Natural killer cell (primary cell): ENCODE measurements at regions of chr13 and their contacts with region 1.

Region 1: GRCh38 chr13:31909864-31910551 is 121.6 kb upstream of the FRY start:
- DNase-seq: peak in 1 of 2 donors; percentile 82
- ATAC-seq: peak; percentile 66 to 78 (median 71)
- H3K4me3 ChIP-seq: no peak overlapping the region
- H3K4me3 Mint-ChIP-seq: no peak overlapping the region
- H3K27ac ChIP-seq: no peak overlapping the region
- H3K27ac Mint-ChIP-seq: no peak overlapping the region
- H3K4me1 ChIP-seq: no peaks in the 10 kb centered on the region
- H3K4me1 Mint-ChIP-seq: peaks cover 13 to 19% of the 10 kb centered on the region in 2 donors
- H3K27me3 ChIP-seq: no peaks in the 10 kb centered on the region
- H3K27me3 Mint-ChIP-seq: no peaks in the 10 kb centered on the region
- CTCF ChIP-seq: peak; percentile 98

Region 2: DNA sequence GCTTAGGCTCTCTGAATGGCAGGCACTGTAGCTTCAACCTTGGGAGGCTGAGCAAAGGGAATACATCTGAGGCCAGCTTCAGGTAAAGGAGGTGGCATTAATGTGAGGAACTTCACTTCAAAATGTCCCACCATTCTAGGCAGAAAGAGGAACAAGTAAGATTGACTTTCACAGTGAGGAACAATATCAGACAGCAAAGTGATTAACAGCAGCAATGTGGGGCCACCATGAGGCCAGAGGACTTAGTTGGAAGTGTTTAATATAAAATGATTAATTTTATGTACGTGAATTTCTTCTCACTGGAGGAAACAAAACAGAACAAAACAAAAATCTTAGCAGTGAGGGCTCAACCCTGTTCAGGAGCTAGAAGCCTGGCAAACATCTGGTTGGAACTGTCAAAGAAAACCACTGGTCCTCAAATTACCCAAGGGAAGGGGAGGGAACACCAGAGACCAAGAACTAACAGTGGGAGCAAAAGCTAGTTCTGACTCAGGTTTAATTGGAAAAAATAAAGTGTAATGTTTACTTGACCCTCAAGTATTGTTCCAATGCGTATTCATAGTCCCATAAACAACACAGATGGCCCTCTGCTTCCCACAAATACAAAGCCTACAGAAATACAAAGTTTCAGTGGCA is 77.6 kb after region 1 on chr13:
- intact Hi-C with region 1: loop called (anchors 2 kb)
- DNase-seq: no peak
- ATAC-seq: no peak
- H3K4me3 ChIP-seq: no peak overlapping the region
- H3K4me3 Mint-ChIP-seq: no peak overlapping the region
- H3K27ac ChIP-seq: no peak overlapping the region
- H3K27ac Mint-ChIP-seq: no peak overlapping the region
- H3K4me1 ChIP-seq: no peaks in the 10 kb centered on the region
- H3K4me1 Mint-ChIP-seq: peaks cover 0 to 5% of the 10 kb centered on the region in 2 donors
- H3K27me3 ChIP-seq: no peaks in the 10 kb centered on the region
- H3K27me3 Mint-ChIP-seq: no peaks in the 10 kb centered on the region
- CTCF ChIP-seq: no peak

Region 3: GRCh38 chr13:32031025-32031814 is 121.2 kb after region 1 on chr13 and contains the start of gene FRY:
- intact Hi-C with region 1: no loop called
- DNase-seq: peak; percentile 39 to 73
- ATAC-seq: peak; percentile 79 to 86 (median 81)
- H3K4me3 ChIP-seq: peak within 1 kb of the TSS; percentile 74
- H3K4me3 Mint-ChIP-seq: peak within 1 kb of the TSS; percentile 93
- H3K27ac ChIP-seq: peak within 1 kb of the TSS; percentile 48
- H3K27ac Mint-ChIP-seq: peak within 1 kb of the TSS; percentile 64 to 78
- H3K4me1 ChIP-seq: peaks cover 8% of the 10 kb centered on the region
- H3K4me1 Mint-ChIP-seq: peaks cover 10 to 22% of the 10 kb centered on the region in 2 donors
- H3K27me3 ChIP-seq: no peaks in the 10 kb centered on the region
- H3K27me3 Mint-ChIP-seq: peaks cover 3 to 20% of the 10 kb centered on the region in 2 donors
- CTCF ChIP-seq: no peak
- total RNA-seq, gene FRY: 25.1 to 52.1 (median 27.4) TPM

Region 4: GRCh38 chr13:32246468-32246867 is 336.5 kb after region 1 on chr13:
- intact Hi-C with region 1: loop called (anchors 5 kb)
- DNase-seq: peak in 1 of 2 donors; percentile 47
- ATAC-seq: peak; percentile 56 to 82 (median 70)
- H3K4me3 ChIP-seq: no peak overlapping the region
- H3K4me3 Mint-ChIP-seq: no peak overlapping the region
- H3K27ac ChIP-seq: no peak overlapping the region
- H3K27ac Mint-ChIP-seq: no peak overlapping the region
- H3K4me1 ChIP-seq: peaks cover 11% of the 10 kb centered on the region
- H3K4me1 Mint-ChIP-seq: peaks cover 27 to 30% of the 10 kb centered on the region in 2 donors
- H3K27me3 ChIP-seq: no peaks in the 10 kb centered on the region
- H3K27me3 Mint-ChIP-seq: no peaks in the 10 kb centered on the region
- CTCF ChIP-seq: peak; percentile 60

Region 5: DNA sequence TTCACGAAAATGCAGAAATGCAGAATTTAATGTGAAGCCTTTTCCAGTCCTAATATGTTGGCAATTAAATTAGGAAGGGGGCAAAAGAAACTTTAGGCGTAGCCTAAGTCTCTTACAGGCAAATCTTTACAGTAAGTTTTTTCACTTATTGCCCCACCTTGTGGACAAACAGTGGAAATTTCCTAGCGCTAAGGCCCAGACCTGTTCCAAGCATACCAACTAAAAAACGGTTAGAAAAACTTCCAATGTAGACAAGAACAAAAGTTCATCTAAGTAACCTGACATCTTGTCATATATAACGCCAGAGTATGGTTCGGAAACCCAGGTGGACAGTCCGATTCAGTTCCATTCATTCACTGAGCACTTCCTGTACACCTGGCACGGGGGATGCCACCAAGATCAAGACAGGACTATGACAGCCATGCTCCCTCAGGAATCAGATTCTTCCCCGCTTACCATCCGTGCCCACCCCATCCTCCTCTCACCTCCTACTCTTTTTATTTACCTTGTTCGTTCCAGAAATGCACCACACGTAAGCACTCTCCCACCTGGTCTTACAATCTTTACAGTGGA is 400.2 kb after region 1 on chr13:
- intact Hi-C with region 1: loop called (anchors 1 kb)
- DNase-seq: peak in 1 of 2 donors; percentile 69
- ATAC-seq: peak; percentile 24 to 46 (median 26)
- H3K4me3 ChIP-seq: no peak overlapping the region
- H3K4me3 Mint-ChIP-seq: peak overlapping the region; percentile 74
- H3K27ac ChIP-seq: no peak overlapping the region
- H3K27ac Mint-ChIP-seq: no peak overlapping the region
- H3K4me1 ChIP-seq: peaks cover 15% of the 10 kb centered on the region
- H3K4me1 Mint-ChIP-seq: peaks cover 20 to 27% of the 10 kb centered on the region in 2 donors
- H3K27me3 ChIP-seq: no peaks in the 10 kb centered on the region
- H3K27me3 Mint-ChIP-seq: peaks cover 0 to 8% of the 10 kb centered on the region in 2 donors
- CTCF ChIP-seq: peak; percentile 72